Sigmoid colon (tissue), 7 donors: ENCODE measurements at regions of chr20 and their contacts with region 1.

Region 1: GRCh38 chr20:3470627-3471396 is at the start of gene ATRN:
- DNase-seq: peak; percentile 92
- H3K4me3 ChIP-seq: peak within 1 kb of the TSS; percentile 80 to 98 (median 96)
- H3K27ac ChIP-seq: peak within 1 kb of the TSS; percentile 81 to 88 (median 86)
- H3K4me1 ChIP-seq: peaks cover 0 to 29% (median 24%) of the 10 kb centered on the region in 4 donors
- H3K27me3 ChIP-seq: no peaks in the 10 kb centered on the region
- CTCF ChIP-seq: no peak
- EP300 ChIP-seq: no peak
- POLR2A ChIP-seq: peak; percentile 27 to 36
- total RNA-seq, gene ATRN: 11.4 to 16.1 (median 13.4) TPM

Region 2: DNA sequence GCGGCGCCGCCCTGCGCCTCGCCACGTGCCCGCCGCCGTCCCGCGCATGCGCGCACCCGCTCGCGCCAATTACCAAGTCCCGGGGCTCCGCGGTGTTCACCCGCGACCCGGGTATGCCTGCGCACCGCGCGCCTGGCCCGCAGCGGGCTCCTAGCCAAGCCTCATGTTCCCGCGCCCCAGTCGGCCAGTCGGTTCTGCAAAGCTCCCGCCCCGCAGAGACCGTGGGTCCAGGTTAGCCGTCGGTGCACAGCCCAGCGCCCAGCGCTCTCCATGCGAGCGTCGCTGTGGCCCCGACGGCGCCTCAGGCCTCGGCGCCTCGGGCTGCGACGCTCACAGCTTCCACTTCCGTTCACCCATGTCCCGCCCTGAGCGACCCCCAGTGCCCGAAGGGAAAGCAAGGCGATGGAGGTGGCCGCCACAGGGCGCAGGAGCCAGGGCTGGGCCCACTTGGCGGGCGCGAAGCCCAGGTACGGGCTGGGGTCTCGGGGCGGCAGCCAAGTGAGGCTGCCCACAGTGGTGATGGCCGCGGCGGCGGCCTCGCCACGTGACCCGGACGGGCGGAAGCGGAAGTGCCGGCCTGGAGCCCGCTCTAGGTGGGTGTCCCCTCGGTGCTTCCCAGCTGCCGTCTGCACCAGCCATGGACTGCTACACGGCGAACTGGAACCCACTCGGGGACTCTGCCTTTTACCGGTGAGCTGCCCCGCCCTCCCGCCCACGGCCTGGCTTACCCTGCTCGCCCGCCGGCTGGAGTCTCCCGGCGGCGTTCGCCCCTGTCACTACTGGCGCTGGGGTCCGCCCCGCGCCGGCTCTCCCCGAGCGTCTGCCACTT is 630.5 kb before region 1 on chr20 and contains the starts of genes PCED1A and VPS16:
- intact Hi-C with region 1: no loop called
- DNase-seq: peak; percentile 93
- H3K4me3 ChIP-seq: peak within 1 kb of the TSS; percentile 79 to 96 (median 85)
- H3K27ac ChIP-seq: peak within 1 kb of the TSS; percentile 86 to 95 (median 92)
- H3K4me1 ChIP-seq: peaks cover 0 to 24% (median 14%) of the 10 kb centered on the region in 4 donors
- H3K27me3 ChIP-seq: no peaks in the 10 kb centered on the region
- CTCF ChIP-seq: no peak
- EP300 ChIP-seq: no peak
- POLR2A ChIP-seq: peak; percentile 25 to 34
- total RNA-seq, gene PCED1A: 12.7 to 27.7 (median 21.5) TPM
- total RNA-seq, gene VPS16: 19.4 to 24.4 (median 21.0) TPM

Region 3: GRCh38 chr20:3407771-3408637 is 62.8 kb before region 1 on chr20:
- intact Hi-C with region 1: loop called (anchors 1 kb)
- DNase-seq: peak; percentile 89
- H3K4me3 ChIP-seq: peak overlapping the region; percentile 69 to 96 (median 92)
- H3K27ac ChIP-seq: peak overlapping the region; percentile 94 to 97 (median 96)
- H3K4me1 ChIP-seq: peaks cover 0 to 31% (median 24%) of the 10 kb centered on the region in 4 donors
- H3K27me3 ChIP-seq: no peaks in the 10 kb centered on the region
- CTCF ChIP-seq: no peak
- EP300 ChIP-seq: no peak
- POLR2A ChIP-seq: no peak

Region 4: DNA sequence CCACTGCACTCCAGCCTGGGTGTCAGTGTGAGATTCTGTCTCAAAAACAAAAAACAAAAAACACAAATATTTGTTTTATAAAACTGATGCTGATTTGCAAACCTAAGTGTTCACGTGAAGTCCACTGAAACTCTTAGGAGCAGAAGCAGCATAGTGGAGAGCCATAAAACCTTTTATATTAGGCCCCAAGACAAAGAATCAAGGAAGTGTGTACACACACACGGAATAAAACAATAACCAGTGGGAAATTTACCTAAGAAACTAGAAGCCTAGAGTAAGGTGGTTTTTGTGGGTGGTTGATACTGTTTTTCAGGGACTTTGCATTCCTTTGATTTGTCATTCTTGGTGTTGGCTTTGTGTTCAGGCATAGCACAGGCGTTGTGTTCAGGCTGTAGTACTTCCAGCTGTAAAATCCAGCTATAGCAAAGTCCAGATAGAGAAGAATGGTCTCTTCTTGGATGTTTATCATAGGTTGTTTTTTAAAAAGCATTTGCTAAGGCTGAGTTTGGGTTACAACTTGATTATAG is 61.3 kb after region 1 on chr20:
- intact Hi-C with region 1: no loop called
- DNase-seq: no peak
- H3K4me3 ChIP-seq: no peak overlapping the region
- H3K27ac ChIP-seq: no peak overlapping the region
- H3K4me1 ChIP-seq: no peaks in the 10 kb centered on the region
- H3K27me3 ChIP-seq: no peaks in the 10 kb centered on the region
- CTCF ChIP-seq: no peak
- EP300 ChIP-seq: no peak
- POLR2A ChIP-seq: no peak